Ascending aorta (tissue), 2 donors: ENCODE measurements at regions of chr11 and their contacts with region 1.

Region 1: GRCh38 chr11:86740709-86741483 is 59.4 kb upstream of the PRSS23 start:
- DNase-seq: peak; percentile 39 to 91
- H3K4me3 ChIP-seq: no peak overlapping the region
- H3K27ac ChIP-seq: peak overlapping the region; percentile 95 to 97
- H3K4me1 ChIP-seq: peaks cover 18 to 53% of the 10 kb centered on the region in 2 donors
- H3K27me3 ChIP-seq: no peaks in the 10 kb centered on the region
- CTCF ChIP-seq: no peak

Region 2: GRCh38 chr11:86632499-86633269 is 108.2 kb before region 1 on chr11:
- intact Hi-C with region 1: loop called (anchors 2 kb)
- DNase-seq: peak; percentile 35 to 84
- H3K4me3 ChIP-seq: no peak overlapping the region
- H3K27ac ChIP-seq: peak overlapping the region; percentile 37 to 80
- H3K4me1 ChIP-seq: peaks cover 21 to 36% of the 10 kb centered on the region in 2 donors
- H3K27me3 ChIP-seq: no peaks in the 10 kb centered on the region
- CTCF ChIP-seq: peak in 2 of 3 experiments; percentile 32 to 62

Region 3: GRCh38 chr11:86671682-86672621 is 68.9 kb before region 1 on chr11 and contains the start of gene ME3:
- intact Hi-C with region 1: loop called (anchors 2 kb)
- DNase-seq: peak in 1 of 2 donors; percentile 85
- H3K4me3 ChIP-seq: peak within 1 kb of the TSS; percentile 81 to 95
- H3K27ac ChIP-seq: peak within 1 kb of the TSS; percentile 93 to 94
- H3K4me1 ChIP-seq: peaks cover 0 to 22% of the 10 kb centered on the region in 2 donors
- H3K27me3 ChIP-seq: no peaks in the 10 kb centered on the region
- CTCF ChIP-seq: peak in 1 of 3 experiments; percentile 11
- total RNA-seq, gene ME3: 34.2 TPM

Region 4: DNA sequence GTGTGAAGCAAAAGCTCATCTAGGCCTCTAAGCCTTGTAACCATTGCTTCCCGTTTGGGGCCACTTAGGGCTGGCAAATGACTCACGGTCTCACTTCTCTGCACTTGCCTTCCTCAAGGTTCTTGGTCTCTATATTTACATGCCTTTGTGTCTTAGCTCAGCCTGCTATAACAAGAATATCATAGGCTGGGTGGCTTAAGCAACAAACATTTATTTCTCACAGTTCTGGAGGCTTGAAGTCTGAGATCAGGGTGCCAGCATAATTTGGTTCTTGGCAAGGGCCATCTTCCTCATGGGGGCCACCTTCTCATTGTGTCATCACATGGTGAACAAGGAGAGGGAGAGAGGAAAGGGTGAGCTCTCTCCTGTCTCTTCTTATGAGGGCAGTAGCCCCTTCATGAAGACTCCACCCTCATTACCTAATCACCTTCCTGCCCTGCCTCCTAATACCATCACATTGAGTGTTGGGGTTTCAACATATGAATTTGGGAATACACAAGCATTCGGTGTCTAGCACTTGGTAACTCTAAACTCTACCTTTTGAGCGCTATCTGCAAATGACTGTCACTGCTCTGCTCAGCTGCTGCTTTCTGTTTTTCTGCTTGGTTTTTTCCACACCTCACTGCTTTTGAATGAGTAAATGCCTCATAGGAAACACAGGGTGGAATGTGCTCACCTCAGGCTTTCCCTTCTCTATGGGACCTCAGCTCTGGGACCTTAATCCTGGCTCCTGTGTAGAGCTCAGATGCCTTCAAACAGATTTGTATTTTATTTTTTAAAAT is 52.3 kb before region 1 on chr11:
- intact Hi-C with region 1: loop called (anchors 2 kb)
- DNase-seq: peak; percentile 50 to 74
- H3K4me3 ChIP-seq: no peak overlapping the region
- H3K27ac ChIP-seq: peak overlapping the region; percentile 56 to 79
- H3K4me1 ChIP-seq: peaks cover 4 to 14% of the 10 kb centered on the region in 2 donors
- H3K27me3 ChIP-seq: no peaks in the 10 kb centered on the region
- CTCF ChIP-seq: no peak

Region 5: DNA sequence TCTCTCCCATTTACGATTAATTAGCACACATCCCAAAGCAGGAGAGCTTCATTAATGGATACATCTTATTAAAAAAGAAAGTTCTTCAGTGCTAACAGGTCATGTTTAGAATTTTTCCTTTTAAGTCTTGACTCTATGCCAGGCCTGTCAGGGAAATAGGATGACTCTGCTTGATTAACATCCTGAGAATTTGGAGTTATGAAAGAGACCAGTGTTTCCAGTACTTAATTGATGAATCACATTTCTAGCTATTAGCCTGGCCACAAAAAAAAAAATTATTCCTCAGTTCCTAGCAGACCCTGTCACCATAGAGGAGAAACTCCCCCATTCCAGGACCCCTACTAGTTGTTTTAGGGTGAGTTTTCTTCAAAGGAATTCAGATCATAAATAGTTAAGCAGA is 44.9 kb before region 1 on chr11:
- intact Hi-C with region 1: loop called (anchors 2 kb)
- DNase-seq: no peak
- H3K4me3 ChIP-seq: no peak overlapping the region
- H3K27ac ChIP-seq: no peak overlapping the region
- H3K4me1 ChIP-seq: peaks cover 0 to 9% of the 10 kb centered on the region in 2 donors
- H3K27me3 ChIP-seq: no peaks in the 10 kb centered on the region
- CTCF ChIP-seq: no peak

Region 6: DNA sequence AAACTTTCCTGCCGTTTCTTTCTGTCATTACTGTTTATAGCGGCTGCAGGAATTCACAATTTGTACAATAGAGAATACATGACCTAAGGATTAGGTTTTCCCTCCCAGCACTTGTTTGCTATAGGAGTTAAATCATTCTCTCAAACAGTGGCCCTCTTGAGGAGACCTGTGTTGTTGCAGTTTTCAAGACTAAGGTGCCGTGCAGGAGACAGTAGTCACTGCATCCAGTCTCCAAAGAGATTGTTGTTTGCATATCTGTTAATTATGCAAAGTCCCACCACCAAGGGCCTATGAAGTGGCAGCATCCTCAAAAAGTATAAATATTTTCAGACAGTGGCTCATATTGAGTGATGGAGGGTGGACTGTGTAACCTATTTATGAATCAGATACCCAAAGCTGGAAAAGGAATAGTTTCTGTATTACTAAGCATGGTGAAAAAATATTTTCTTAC is 61.7 kb after region 1 on chr11:
- intact Hi-C with region 1: loop called (anchors 2 kb)
- DNase-seq: no peak
- H3K4me3 ChIP-seq: peak overlapping the region in 1 of 2 donors; percentile 67
- H3K27ac ChIP-seq: peak overlapping the region; percentile 67 to 76
- H3K4me1 ChIP-seq: peaks cover 0 to 16% of the 10 kb centered on the region in 2 donors
- H3K27me3 ChIP-seq: no peaks in the 10 kb centered on the region
- CTCF ChIP-seq: peak in 2 of 3 experiments; percentile 33 to 57

Region 7: GRCh38 chr11:86919557-86920210 is 178.8 kb after region 1 on chr11:
- intact Hi-C with region 1: loop called (anchors 5 kb)
- DNase-seq: no peak
- H3K4me3 ChIP-seq: peak overlapping the region in 1 of 2 donors; percentile 6
- H3K27ac ChIP-seq: peak overlapping the region; percentile 85 to 89
- H3K4me1 ChIP-seq: peaks cover 8 to 57% of the 10 kb centered on the region in 2 donors
- H3K27me3 ChIP-seq: no peaks in the 10 kb centered on the region
- CTCF ChIP-seq: peak; percentile 52 to 65 (median 59)

Region 8: GRCh38 chr11:87405843-87406242 is 664.9 kb after region 1 on chr11:
- intact Hi-C with region 1: no loop called
- DNase-seq: peak; percentile 27 to 75
- H3K4me3 ChIP-seq: no peak overlapping the region
- H3K27ac ChIP-seq: peak overlapping the region; percentile 10 to 59
- H3K4me1 ChIP-seq: peaks cover 0 to 3% of the 10 kb centered on the region in 2 donors
- H3K27me3 ChIP-seq: no peaks in the 10 kb centered on the region
- CTCF ChIP-seq: no peak